ENCODE measurements at regions of chr17 and their contacts with region 1.

Region 1: GRCh38 chr17:8991514-8992285 is 26.2 kb upstream of the PIK3R5 start:
- DNase-seq: peak; percentile 47
- H3K4me3 ChIP-seq: no peak overlapping the region
- H3K27ac ChIP-seq: no peak overlapping the region
- H3K4me1 ChIP-seq: no peaks in the 10 kb centered on the region
- H3K27me3 ChIP-seq: no peaks in the 10 kb centered on the region
- CTCF ChIP-seq: peak; percentile 72 to 83

Region 2: GRCh38 chr17:8542599-8543502 is 448.8 kb before region 1 on chr17:
- CTCF ChIA-PET with region 1: no interaction called
- dilution Hi-C with region 1: no loop called
- in situ Hi-C with region 1: no loop called
- intact Hi-C with region 1: no loop called
- DNase-seq: peak; percentile 39
- H3K4me3 ChIP-seq: no peak overlapping the region
- H3K27ac ChIP-seq: no peak overlapping the region
- H3K4me1 ChIP-seq: no peaks in the 10 kb centered on the region
- H3K27me3 ChIP-seq: no peaks in the 10 kb centered on the region
- CTCF ChIP-seq: no peak

Region 3: GRCh38 chr17:8785547-8786413 is 205.9 kb before region 1 on chr17:
- CTCF ChIA-PET with region 1: no interaction called
- dilution Hi-C with region 1: no loop called
- in situ Hi-C with region 1: no loop called
- intact Hi-C with region 1: loop called (anchors 10 kb)
- DNase-seq: peak; percentile 45
- H3K4me3 ChIP-seq: no peak overlapping the region
- H3K27ac ChIP-seq: no peak overlapping the region
- H3K4me1 ChIP-seq: no peaks in the 10 kb centered on the region
- H3K27me3 ChIP-seq: no peaks in the 10 kb centered on the region
- CTCF ChIP-seq: peak; percentile 83 to 89

Region 4: DNA sequence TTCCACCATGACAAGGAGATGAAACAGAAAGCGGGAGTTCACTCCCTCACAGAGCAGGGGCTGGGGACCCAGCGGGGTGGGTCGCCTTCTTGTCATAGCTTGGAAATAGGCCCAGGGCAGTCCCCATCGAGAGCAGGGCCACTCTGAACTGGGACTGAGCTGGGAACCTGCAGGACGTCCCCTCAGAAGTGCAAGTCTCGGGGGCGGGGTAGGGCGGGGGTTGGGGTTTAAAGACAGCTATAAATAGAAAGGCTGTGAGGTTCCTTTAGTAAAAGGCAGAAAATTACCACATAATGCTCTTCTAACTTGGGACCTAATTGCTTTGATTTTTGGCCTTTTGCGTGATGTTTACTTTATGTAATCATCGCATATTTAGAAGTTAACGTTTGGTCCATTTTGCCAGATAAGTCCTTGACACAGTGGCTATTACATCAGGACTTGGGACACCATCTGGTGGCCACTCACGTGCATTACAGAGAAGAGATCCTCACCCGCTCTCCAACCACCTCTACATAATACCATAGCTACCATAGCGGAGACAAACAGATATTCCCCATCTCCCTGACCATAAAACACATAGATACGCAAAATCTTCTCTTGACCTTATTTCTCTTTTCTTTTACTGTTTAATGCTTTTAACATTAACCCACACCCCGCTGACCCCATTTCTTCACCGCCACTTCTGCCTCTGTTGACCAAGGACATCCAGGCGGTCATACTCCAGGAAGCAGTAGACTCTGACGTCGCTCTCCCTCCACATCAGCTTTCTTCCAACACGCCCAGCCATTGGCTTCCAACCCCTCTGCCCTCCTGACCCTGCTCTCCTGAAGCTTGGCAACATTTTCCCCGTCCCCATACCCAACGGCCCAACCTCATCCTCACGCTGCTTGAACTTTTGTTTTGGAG is 96.8 kb before region 1 on chr17:
- CTCF ChIA-PET with region 1: no interaction called
- dilution Hi-C with region 1: no loop called
- in situ Hi-C with region 1: no loop called
- intact Hi-C with region 1: loop called (anchors 2 kb)
- DNase-seq: peak; percentile 55
- H3K4me3 ChIP-seq: no peak overlapping the region
- H3K27ac ChIP-seq: no peak overlapping the region
- H3K4me1 ChIP-seq: no peaks in the 10 kb centered on the region
- H3K27me3 ChIP-seq: no peaks in the 10 kb centered on the region
- CTCF ChIP-seq: peak; percentile 76 to 80

Region 5: GRCh38 chr17:9291912-9292560 is 300.3 kb after region 1 on chr17:
- CTCF ChIA-PET with region 1: no interaction called
- dilution Hi-C with region 1: no loop called
- in situ Hi-C with region 1: no loop called
- intact Hi-C with region 1: loop called (anchors 5 kb)
- DNase-seq: no peak
- H3K4me3 ChIP-seq: no peak overlapping the region
- H3K27ac ChIP-seq: no peak overlapping the region
- H3K4me1 ChIP-seq: peaks cover 9% of the 10 kb centered on the region
- H3K27me3 ChIP-seq: no peaks in the 10 kb centered on the region
- CTCF ChIP-seq: peak; percentile 49 to 69

Region 6: GRCh38 chr17:9512323-9513168 is 520.8 kb after region 1 on chr17:
- CTCF ChIA-PET with region 1: no interaction called
- dilution Hi-C with region 1: no loop called
- in situ Hi-C with region 1: loop called (anchors 10 kb)
- intact Hi-C with region 1: no loop called
- DNase-seq: peak; percentile 75
- H3K4me3 ChIP-seq: no peak overlapping the region
- H3K27ac ChIP-seq: no peak overlapping the region
- H3K4me1 ChIP-seq: peaks cover 10% of the 10 kb centered on the region
- H3K27me3 ChIP-seq: no peaks in the 10 kb centered on the region
- CTCF ChIP-seq: no peak

Region 7: DNA sequence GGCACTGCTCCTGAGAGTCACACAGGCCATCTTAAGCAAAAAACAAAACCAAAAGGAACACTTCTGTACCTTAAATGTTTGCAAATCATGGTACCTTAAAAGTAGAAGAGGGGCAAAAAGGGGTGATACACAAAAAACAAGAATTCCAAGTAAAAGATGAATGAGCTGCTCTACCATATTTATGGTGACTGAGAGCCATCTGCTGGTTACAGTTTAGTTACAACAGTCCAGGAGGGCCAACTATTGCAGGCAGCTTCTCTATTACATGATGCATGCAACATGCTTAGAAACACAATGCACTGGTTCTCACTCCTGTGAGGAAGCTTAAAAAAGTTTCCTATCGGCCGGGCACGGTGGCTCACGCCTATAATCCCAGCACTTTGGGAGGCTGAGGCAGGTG is 530.4 kb after region 1 on chr17:
- CTCF ChIA-PET with region 1: interaction called, 3 read pairs
- dilution Hi-C with region 1: no loop called
- in situ Hi-C with region 1: loop called (anchors 10 kb)
- intact Hi-C with region 1: loop called (anchors 1 kb)
- DNase-seq: peak; percentile 14
- H3K4me3 ChIP-seq: no peak overlapping the region
- H3K27ac ChIP-seq: no peak overlapping the region
- H3K4me1 ChIP-seq: no peaks in the 10 kb centered on the region
- H3K27me3 ChIP-seq: no peaks in the 10 kb centered on the region
- CTCF ChIP-seq: peak; percentile 39 to 56

Region 8: DNA sequence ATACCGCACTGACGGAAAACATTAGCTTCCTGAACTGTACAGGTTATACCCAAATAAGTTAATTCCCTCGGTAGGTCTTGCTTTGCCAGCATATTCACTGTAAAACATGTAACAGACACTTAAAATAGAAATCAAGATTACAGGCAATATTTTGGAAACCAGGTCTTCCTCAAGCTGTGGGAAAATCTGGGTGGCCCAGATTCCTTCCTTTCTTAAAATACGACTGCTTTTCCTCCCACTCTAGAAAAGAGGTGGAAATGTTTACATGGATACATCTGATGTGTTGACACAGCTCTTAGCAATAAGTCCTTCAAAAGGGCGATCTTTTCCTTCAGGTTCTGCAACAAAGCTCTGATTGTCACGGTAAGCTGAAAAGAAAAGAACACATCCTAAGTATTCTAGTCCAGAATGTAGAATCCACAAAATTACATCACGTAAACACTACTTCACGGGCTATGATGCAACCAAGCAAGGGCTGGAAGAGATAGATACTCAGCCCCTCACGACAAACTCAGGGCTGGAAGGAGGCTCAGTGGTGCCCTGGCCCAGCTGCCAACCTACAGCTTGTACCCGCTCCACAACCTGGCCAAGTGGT is 565.6 kb after region 1 on chr17:
- CTCF ChIA-PET with region 1: no interaction called
- dilution Hi-C with region 1: no loop called
- in situ Hi-C with region 1: no loop called
- intact Hi-C with region 1: loop called (anchors 1 kb)
- DNase-seq: no peak
- H3K4me3 ChIP-seq: no peak overlapping the region
- H3K27ac ChIP-seq: no peak overlapping the region
- H3K4me1 ChIP-seq: no peaks in the 10 kb centered on the region
- H3K27me3 ChIP-seq: no peaks in the 10 kb centered on the region
- CTCF ChIP-seq: no peak